ENCODE measurements at regions of chr14 and their contacts with region 1.

Region 1: GRCh38 chr14:106790189-106791036 is 1264.0 kb downstream of the TMEM121 start:
- DNase-seq: peak; percentile 92
- ATAC-seq: peak; percentile 92
- H3K4me3 Mint-ChIP-seq: no peak overlapping the region
- H3K27ac Mint-ChIP-seq: no peak overlapping the region
- H3K4me1 Mint-ChIP-seq: peaks cover 8% of the 10 kb centered on the region
- H3K27me3 Mint-ChIP-seq: peaks cover 4% of the 10 kb centered on the region
- CTCF ChIP-seq: peak; percentile 90

Region 2: GRCh38 chr14:106505366-106505765 is 285.0 kb before region 1 on chr14:
- CTCF ChIA-PET with region 1: no interaction called
- POLR2A ChIA-PET with region 1: no interaction called
- intact Hi-C with region 1: no loop called
- DNase-seq: no peak
- ATAC-seq: no peak
- H3K4me3 Mint-ChIP-seq: no peak overlapping the region
- H3K27ac Mint-ChIP-seq: no peak overlapping the region
- H3K4me1 Mint-ChIP-seq: peaks cover 52% of the 10 kb centered on the region
- H3K27me3 Mint-ChIP-seq: peaks cover 1% of the 10 kb centered on the region
- CTCF ChIP-seq: no peak

Region 3: GRCh38 chr14:106547735-106548434 is 242.5 kb before region 1 on chr14:
- CTCF ChIA-PET with region 1: no interaction called
- POLR2A ChIA-PET with region 1: no interaction called
- intact Hi-C with region 1: no loop called
- DNase-seq: no peak
- ATAC-seq: no peak
- H3K4me3 Mint-ChIP-seq: no peak overlapping the region
- H3K27ac Mint-ChIP-seq: no peak overlapping the region
- H3K4me1 Mint-ChIP-seq: peaks cover 9% of the 10 kb centered on the region
- H3K27me3 Mint-ChIP-seq: peaks cover 9% of the 10 kb centered on the region
- CTCF ChIP-seq: no peak

Region 4: DNA sequence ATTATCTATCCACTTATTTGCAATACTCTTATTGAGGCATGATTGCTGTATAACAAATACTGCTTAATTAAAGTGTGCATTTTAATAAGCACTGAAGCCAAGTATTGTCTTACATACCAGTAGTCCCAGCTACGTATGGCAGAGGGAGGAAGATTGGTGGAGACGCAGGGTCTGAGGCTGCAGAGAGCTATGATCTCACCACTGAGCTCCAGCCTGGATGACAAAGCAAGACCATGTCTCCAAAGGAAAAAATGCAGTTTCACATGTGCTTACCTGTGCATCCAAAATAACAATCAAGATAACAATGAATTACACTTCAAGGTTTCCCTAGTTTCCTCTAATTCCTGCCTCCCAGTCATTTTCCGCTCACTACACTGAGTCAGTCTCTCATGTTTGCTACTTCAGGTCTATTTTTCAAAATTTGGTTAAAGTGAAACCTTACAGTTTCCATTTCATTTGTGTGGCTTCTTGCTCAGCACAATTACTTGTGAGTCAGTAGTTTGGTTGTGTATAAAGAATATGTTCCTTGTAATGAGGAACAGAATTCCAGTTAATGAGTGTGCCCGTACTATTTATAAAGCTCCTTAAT is 13.9 kb before region 1 on chr14:
- CTCF ChIA-PET with region 1: interaction called, 17 read pairs
- POLR2A ChIA-PET with region 1: no interaction called
- intact Hi-C with region 1: no loop called
- DNase-seq: no peak
- ATAC-seq: no peak
- H3K4me3 Mint-ChIP-seq: no peak overlapping the region
- H3K27ac Mint-ChIP-seq: no peak overlapping the region
- H3K4me1 Mint-ChIP-seq: peaks cover 17% of the 10 kb centered on the region
- H3K27me3 Mint-ChIP-seq: no peaks in the 10 kb centered on the region
- CTCF ChIP-seq: no peak

Region 5: DNA sequence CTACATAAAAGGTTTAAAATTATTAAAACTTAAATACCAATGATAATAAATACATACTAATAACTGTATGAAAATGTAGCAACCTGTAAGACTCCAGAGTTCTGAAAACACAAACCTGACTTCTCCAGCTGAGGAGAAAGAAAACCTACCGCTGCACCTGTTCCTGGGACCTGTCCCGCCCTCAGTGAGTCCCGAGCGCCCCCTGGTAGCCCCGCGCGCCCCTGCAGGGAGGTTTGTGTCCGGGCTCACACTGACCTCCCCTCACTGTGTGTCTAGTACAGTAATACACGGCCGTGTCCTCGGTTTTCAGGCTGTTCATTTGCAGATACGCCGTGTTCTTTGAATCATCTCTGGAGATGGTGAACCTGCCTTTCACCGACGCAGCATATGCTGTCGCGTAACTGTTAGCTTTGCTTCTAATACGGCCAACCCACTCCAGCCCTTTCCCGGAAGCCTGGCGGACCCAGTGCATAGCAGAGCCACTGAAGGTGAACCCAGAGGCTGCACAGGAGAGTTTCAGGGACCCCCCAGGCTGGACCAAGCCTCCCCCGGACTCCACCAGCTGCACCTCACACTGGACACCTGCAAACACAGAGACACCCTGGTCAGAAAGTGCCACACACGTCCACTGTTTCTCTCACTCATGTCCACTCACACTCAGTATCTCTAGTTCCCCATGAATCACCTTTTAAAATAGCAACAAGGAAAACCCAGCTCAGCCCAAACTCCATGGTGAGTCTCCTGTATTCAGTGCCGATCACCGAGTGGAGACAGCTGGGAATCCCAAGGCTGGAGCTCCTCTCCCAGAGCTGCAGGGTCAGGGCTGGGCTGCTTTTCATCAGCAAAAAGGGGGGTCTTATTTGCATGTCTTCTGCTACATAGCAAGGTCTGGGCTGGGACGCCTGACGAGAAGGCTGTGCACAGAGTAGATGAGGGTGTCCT is 12.3 kb after region 1 on chr14:
- CTCF ChIA-PET with region 1: interaction called, 25 read pairs
- POLR2A ChIA-PET with region 1: no interaction called
- intact Hi-C with region 1: no loop called
- DNase-seq: peak; percentile 43
- ATAC-seq: no peak
- H3K4me3 Mint-ChIP-seq: no peak overlapping the region
- H3K27ac Mint-ChIP-seq: no peak overlapping the region
- H3K4me1 Mint-ChIP-seq: no peaks in the 10 kb centered on the region
- H3K27me3 Mint-ChIP-seq: peaks cover 46% of the 10 kb centered on the region
- CTCF ChIP-seq: peak; percentile 44